Naive thymus-derived CD4-positive, alpha-beta T cell (primary cell): ENCODE measurements at regions of chr2 and their contacts with region 1.

Region 1: DNA sequence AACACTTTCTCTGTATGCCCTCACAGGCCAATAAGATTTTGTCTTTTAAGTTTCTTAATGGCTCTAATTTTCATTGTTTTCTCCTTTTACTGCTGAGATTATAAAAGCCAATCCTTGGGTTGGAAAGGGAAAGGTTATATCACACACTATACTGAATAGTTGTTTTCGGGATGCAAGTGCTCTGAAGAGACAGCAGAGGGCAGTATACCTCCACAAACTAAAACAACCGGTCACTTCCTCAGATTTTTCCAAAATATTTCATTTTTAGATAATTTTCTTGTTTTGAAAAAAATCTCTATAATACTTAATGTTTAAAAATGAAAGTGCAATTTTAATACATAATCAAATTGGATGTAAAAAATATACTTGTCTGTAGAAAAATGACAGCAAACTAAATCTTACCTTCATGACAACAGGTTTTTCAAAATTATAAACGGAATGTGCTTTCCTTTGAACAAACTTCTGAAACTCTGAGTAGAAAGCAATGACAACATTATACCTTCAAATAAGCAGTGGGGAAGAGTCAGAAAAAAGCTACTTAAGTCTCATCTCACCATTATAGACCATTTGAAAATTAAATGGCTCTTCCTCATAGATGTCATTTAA is 82.7 kb downstream of the ORC4 start:
- DNase-seq: peak in 5 of 9 donors; percentile 25 to 40 (median 34)
- ATAC-seq: peak; percentile 79
- H3K4me3 ChIP-seq: no peak overlapping the region
- H3K4me3 Mint-ChIP-seq: no peak overlapping the region
- H3K27ac ChIP-seq: no peak overlapping the region
- H3K27ac Mint-ChIP-seq: peak overlapping the region in 4 of 9 donors; percentile 26 to 75 (median 42)
- H3K4me1 ChIP-seq: no peaks in the 10 kb centered on the region
- H3K4me1 Mint-ChIP-seq: peaks cover 0 to 2% (median 0%) of the 10 kb centered on the region in 7 donors
- H3K27me3 ChIP-seq: no peaks in the 10 kb centered on the region
- H3K27me3 Mint-ChIP-seq: no peaks in the 10 kb centered on the region

Region 2: DNA sequence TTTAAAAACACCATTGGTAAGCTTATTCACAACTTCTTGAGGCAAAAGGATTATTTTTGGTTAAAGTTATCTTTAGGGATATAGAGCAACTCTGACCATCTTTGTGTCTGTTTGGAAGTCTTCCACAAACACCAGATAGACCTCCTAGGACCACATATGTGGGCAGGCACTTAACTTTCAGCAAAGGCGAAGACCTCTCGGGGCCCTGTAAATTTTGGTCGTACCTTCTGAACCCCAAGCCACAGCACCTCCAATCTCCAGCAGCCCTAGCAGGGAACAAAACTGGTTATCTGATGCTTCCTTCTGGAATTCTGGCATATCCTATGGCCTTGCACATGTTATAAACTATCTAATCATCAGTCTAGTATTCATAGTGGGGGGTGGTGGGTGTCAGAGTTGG is 197.9 kb after region 1 on chr2:
- CTCF ChIA-PET with region 1: no interaction called
- POLR2A ChIA-PET with region 1: no interaction called
- intact Hi-C with region 1: no loop called
- DNase-seq: no peak
- ATAC-seq: no peak
- H3K4me3 ChIP-seq: no peak overlapping the region
- H3K4me3 Mint-ChIP-seq: no peak overlapping the region
- H3K27ac ChIP-seq: no peak overlapping the region
- H3K27ac Mint-ChIP-seq: no peak overlapping the region
- H3K4me1 ChIP-seq: no peaks in the 10 kb centered on the region
- H3K4me1 Mint-ChIP-seq: peaks cover 0 to 20% (median 0%) of the 10 kb centered on the region in 7 donors
- H3K27me3 ChIP-seq: no peaks in the 10 kb centered on the region
- H3K27me3 Mint-ChIP-seq: no peaks in the 10 kb centered on the region

Region 3: DNA sequence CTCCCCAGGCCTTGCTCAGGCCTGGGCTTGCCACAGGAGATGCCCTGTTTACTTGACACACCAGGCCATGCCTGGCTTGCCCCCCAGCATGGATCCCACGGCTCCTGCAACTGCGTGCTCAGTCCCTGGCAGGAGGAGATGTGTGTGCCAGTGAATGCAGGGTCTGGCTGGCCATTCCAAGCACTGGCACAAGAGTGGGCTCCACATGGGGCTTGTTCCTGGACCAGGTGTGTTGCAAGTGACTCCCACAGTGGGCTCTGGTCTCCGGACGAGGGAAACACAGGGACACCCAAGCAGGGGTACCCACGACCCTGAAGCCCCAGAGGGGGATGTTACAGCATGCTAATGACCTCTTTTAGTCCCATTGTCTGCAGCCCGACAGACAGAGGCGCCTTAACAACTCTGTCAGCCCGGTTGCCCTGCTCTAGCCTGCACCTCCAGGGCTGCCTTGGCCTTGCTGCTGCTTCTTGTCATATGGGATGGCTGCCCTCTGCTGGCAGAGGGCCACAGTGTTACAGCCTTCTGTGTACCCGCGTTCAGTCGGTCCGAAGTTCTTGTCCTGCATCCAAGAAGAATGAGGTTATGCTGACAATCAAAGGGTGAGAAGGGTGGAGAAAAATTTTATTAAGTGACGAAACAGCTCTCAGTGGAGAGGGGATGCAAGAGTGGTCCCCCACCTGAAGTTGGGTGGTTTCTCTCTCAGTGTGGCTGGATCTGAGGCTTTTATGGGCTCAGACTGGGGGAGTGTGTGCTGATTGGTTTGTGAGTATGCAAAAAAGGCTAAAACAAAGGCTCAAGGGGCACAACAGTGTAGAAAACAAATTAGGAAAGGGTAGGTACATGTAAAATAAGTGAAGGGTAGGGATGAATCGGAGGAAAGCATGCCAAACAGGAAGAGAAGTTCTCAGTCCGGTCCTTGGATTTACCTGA is 263.5 kb after region 1 on chr2:
- CTCF ChIA-PET with region 1: no interaction called
- POLR2A ChIA-PET with region 1: no interaction called
- intact Hi-C with region 1: loop called in 1 of 2 experiments (anchors 1 kb)
- DNase-seq: peak in 8 of 9 donors; percentile 2 to 41 (median 24)
- ATAC-seq: peak; percentile 61
- H3K4me3 ChIP-seq: no peak overlapping the region
- H3K4me3 Mint-ChIP-seq: no peak overlapping the region
- H3K27ac ChIP-seq: no peak overlapping the region
- H3K27ac Mint-ChIP-seq: no peak overlapping the region
- H3K4me1 ChIP-seq: no peaks in the 10 kb centered on the region
- H3K4me1 Mint-ChIP-seq: peaks cover 0 to 7% (median 0%) of the 10 kb centered on the region in 7 donors
- H3K27me3 ChIP-seq: no peaks in the 10 kb centered on the region
- H3K27me3 Mint-ChIP-seq: no peaks in the 10 kb centered on the region